ENCODE measurements at regions of chr17 and their contacts with region 1.

Region 1: DNA sequence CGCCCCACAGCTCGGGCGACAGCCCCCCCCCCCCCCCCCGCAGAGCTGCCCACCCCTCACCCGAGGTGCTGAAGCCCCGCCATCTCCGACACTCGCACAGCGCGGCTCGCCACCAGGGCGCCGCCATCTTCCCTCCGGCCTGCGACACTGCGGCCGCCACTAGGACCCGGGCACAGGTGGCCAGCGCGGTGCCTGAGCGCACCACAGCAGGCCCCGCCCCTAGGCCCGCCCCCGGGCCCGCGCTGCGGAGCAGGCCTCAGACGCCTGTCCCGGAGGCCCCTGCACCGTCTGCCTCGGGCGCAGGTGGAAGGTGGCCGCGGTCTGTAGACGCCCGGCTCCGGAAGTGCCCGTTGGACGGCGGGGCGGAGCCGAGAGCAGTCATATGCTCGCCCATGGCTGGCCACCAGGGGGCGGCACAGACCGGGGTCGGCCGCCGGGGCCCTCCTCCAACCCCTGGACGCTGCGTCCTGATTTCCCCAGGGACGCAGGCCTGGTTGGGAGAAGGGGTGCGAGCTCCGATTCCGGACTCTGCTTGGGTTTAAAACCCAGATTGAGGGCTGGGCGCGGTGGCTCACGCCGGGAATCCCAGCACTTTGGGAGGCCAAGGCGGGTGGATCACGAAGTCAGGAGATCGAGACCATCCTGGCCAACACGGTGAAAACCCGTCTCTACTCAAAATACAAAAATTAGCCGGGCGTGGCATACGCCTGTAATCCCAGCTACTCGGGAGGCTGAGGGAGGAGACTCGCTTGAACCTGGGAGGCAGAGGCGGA is at the start of gene MRPL38:
- DNase-seq: peak; percentile 85 to 98 (median 91)
- ATAC-seq: peak; percentile 96
- H3K4me3 ChIP-seq: peak within 1 kb of the TSS; percentile 77 to 81
- H3K4me3 Mint-ChIP-seq: peak within 1 kb of the TSS; percentile 84
- H3K27ac ChIP-seq: peak within 1 kb of the TSS; percentile 71 to 81
- H3K27ac Mint-ChIP-seq: peak within 1 kb of the TSS; percentile 92
- H3K4me1 ChIP-seq: peaks cover 14% of the 10 kb centered on the region
- H3K4me1 Mint-ChIP-seq: peaks cover 13% of the 10 kb centered on the region
- H3K27me3 ChIP-seq: no peaks in the 10 kb centered on the region
- H3K27me3 Mint-ChIP-seq: no peaks in the 10 kb centered on the region
- CTCF ChIP-seq: peak; percentile 99
- total RNA-seq, gene MRPL38: 171 to 181 TPM

Region 2: DNA sequence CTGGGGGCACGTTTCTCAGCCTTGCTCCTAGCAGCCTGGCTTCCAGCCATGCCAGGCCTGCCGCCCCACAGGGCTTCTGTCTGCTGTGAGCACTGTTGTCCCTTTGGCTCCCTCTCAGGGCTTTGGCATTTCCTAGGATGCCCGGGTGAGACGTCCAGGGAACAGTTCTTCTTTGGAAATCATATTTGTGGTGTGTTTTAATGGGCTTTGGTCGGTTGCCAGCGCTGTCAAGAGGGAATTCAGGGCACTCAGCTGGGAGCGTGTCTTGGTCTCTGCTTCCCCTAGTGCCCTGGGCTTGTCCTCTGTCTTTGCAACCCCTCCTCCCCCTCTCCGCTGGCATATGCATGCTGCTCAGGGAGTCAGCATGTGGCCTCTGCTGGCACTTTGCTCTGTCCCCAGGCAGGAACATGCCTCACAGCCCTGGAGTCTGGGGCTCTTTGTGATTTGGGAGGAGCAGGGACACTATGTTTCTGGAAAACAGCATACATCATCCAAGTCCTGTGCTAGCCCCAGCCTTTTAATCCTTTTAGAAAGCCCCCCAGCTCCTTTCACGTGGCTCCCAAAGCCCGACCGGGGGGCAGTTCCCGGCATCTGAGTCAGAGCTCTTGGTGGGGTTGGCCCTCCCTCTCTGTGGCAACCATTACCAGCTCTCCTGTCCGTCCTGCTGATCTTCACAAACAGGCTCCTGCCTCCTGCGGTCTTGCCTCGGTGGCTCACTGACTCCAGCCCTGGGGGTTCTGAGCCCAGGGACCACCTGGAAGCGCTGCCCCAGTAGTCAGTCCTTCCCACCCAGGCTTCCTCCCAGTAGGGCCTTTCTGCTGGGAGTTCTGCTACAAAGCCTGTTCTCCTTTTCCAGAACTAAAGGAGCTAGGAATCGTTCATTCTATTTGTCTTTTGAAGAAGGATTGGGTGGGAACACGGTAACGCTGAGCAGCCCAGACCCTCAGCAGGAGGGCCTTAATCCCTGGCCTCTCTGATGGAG is 211.1 kb before region 1 on chr17:
- CTCF ChIA-PET with region 1: no interaction called
- POLR2A ChIA-PET with region 1: no interaction called
- intact Hi-C with region 1: no loop called
- DNase-seq: no peak
- ATAC-seq: no peak
- H3K4me3 ChIP-seq: no peak overlapping the region
- H3K4me3 Mint-ChIP-seq: no peak overlapping the region
- H3K27ac ChIP-seq: no peak overlapping the region
- H3K27ac Mint-ChIP-seq: no peak overlapping the region
- H3K4me1 ChIP-seq: peaks cover 26% of the 10 kb centered on the region
- H3K4me1 Mint-ChIP-seq: peaks cover 34% of the 10 kb centered on the region
- H3K27me3 ChIP-seq: no peaks in the 10 kb centered on the region
- H3K27me3 Mint-ChIP-seq: no peaks in the 10 kb centered on the region
- CTCF ChIP-seq: no peak

Region 3: GRCh38 chr17:75877752-75878173 is 27.2 kb before region 1 on chr17:
- CTCF ChIA-PET with region 1: interaction called, 82 read pairs
- POLR2A ChIA-PET with region 1: interaction called, 4 read pairs
- intact Hi-C with region 1: loop called in 1 of 2 experiments (anchors 2 kb)
- DNase-seq: peak; percentile 44 to 85 (median 72)
- ATAC-seq: peak; percentile 67
- H3K4me3 ChIP-seq: peak overlapping the region; percentile 41 to 60
- H3K4me3 Mint-ChIP-seq: peak overlapping the region; percentile 88
- H3K27ac ChIP-seq: peak overlapping the region in 1 of 2 experiments; percentile 0
- H3K27ac Mint-ChIP-seq: peak overlapping the region; percentile 80
- H3K4me1 ChIP-seq: peaks cover 42% of the 10 kb centered on the region
- H3K4me1 Mint-ChIP-seq: peaks cover 46% of the 10 kb centered on the region
- H3K27me3 ChIP-seq: peaks cover 0 to 8% of the 10 kb centered on the region in 2 experiments
- H3K27me3 Mint-ChIP-seq: no peaks in the 10 kb centered on the region
- CTCF ChIP-seq: peak; percentile 69

Region 4: GRCh38 chr17:76005263-76006149 is 100.6 kb after region 1 on chr17:
- CTCF ChIA-PET with region 1: interaction called, 37 read pairs
- POLR2A ChIA-PET with region 1: interaction called, 4 read pairs
- intact Hi-C with region 1: loop called (anchors 1 kb)
- DNase-seq: peak; percentile 53 to 90 (median 76)
- ATAC-seq: peak; percentile 63
- H3K4me3 ChIP-seq: no peak overlapping the region
- H3K4me3 Mint-ChIP-seq: no peak overlapping the region
- H3K27ac ChIP-seq: no peak overlapping the region
- H3K27ac Mint-ChIP-seq: no peak overlapping the region
- H3K4me1 ChIP-seq: no peaks in the 10 kb centered on the region
- H3K4me1 Mint-ChIP-seq: no peaks in the 10 kb centered on the region
- H3K27me3 ChIP-seq: no peaks in the 10 kb centered on the region
- H3K27me3 Mint-ChIP-seq: no peaks in the 10 kb centered on the region
- CTCF ChIP-seq: no peak

Region 5: GRCh38 chr17:76103274-76104139 is 198.6 kb after region 1 on chr17 and contains the start of gene EXOC7:
- CTCF ChIA-PET with region 1: interaction called, 3 read pairs
- POLR2A ChIA-PET with region 1: no interaction called
- intact Hi-C with region 1: loop called (anchors 1 to 10 kb)
- DNase-seq: peak; percentile 83 to 97 (median 93)
- ATAC-seq: peak; percentile 93
- H3K4me3 ChIP-seq: peak within 1 kb of the TSS; percentile 74 to 75
- H3K4me3 Mint-ChIP-seq: peak within 1 kb of the TSS; percentile 98
- H3K27ac ChIP-seq: peak within 1 kb of the TSS; percentile 61 to 77
- H3K27ac Mint-ChIP-seq: peak within 1 kb of the TSS; percentile 95
- H3K4me1 ChIP-seq: peaks cover 21% of the 10 kb centered on the region
- H3K4me1 Mint-ChIP-seq: peaks cover 29% of the 10 kb centered on the region
- H3K27me3 ChIP-seq: no peaks in the 10 kb centered on the region
- H3K27me3 Mint-ChIP-seq: no peaks in the 10 kb centered on the region
- CTCF ChIP-seq: no peak
- total RNA-seq, gene EXOC7: 97.3 to 101 TPM